ENCODE measurements at regions of chr15 and their contacts with region 1.

Region 1: DNA sequence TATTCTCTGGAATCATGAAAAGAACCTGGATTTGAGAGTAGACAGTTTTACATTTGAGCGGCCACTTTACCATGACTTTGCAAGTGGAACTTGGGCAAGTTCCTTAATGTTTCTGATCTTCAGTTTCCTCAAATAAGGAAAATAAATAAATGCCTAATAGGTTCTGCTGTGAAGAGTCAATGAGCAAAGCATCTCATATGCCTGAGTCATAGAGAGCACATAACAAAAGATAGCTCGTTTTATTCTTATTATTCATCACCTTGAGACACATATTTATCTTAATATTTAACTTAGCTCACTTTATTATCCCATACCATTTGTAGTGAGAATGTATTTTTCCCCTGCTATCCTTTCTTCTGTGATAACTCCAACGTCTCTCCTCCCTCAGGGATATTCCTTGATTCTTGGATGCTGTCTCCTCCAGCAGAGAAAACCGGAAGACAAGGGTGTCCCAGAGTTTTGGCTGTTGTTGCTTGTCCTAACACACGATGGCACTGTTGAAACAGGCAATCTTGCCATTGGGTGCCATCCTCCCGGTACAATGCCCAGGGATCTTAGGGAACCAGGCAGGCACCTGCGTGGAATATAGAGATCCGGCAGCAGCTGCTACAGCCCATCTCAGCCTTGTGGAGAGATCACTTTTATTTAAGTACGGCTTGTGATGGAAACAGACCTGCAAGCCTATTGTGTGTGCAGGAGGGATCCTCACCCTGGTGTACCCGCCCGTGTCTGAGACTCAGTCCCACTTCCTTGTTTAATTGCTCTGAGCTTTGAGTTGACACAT is 33.3 kb upstream of the VPS33B start:
- DNase-seq: peak; percentile 11
- ATAC-seq: peak; percentile 85
- H3K4me3 ChIP-seq: no peak overlapping the region
- H3K27ac ChIP-seq: no peak overlapping the region
- H3K4me1 ChIP-seq: no peaks in the 10 kb centered on the region
- H3K27me3 ChIP-seq: no peaks in the 10 kb centered on the region; a peak in 2 of 4 replicates
- CTCF ChIP-seq: peak; percentile 76 to 80 (median 80)
- EP300 ChIP-seq: no peak
- POLR2A ChIP-seq: no peak
- RAD21 ChIP-seq: peak; percentile 94

Region 2: DNA sequence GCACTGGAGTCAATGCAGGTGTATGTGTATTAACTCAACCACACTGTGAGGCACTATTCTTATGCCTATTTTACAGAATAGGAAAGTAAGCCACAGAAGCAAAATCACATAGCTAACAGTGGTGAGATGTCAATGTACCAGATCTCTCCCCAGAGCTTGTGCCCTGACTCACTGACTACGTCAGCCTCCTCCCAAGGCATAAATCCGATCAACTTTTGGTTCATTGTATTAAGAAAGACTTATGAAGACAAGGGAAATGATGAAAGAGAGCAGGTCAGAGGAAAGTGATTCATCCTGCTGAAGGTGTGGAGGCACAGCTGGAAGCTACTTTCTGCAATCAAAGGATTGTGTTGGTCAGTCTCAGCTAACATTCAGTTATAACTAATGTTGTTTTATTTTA is 11.3 kb after region 1 on chr15:
- CTCF ChIA-PET with region 1: interaction called, 14 read pairs
- POLR2A ChIA-PET with region 1: no interaction called
- RAD21 ChIA-PET with region 1: no interaction called
- SMC1A ChIA-PET with region 1: interaction called, 6 read pairs
- in situ Hi-C with region 1: no loop called
- intact Hi-C with region 1: no loop called
- DNase-seq: no peak
- ATAC-seq: no peak
- H3K4me3 ChIP-seq: no peak overlapping the region
- H3K27ac ChIP-seq: no peak overlapping the region
- H3K4me1 ChIP-seq: no peaks in the 10 kb centered on the region
- H3K27me3 ChIP-seq: no peaks in the 10 kb centered on the region; a peak in 1 of 4 replicates
- CTCF ChIP-seq: no peak
- EP300 ChIP-seq: no peak
- POLR2A ChIP-seq: no peak
- RAD21 ChIP-seq: no peak

Region 3: GRCh38 chr15:91142114-91142731 is 86.5 kb after region 1 on chr15:
- CTCF ChIA-PET with region 1: interaction called, 11 read pairs
- POLR2A ChIA-PET with region 1: no interaction called
- RAD21 ChIA-PET with region 1: interaction called, 6 read pairs
- SMC1A ChIA-PET with region 1: interaction called, 12 read pairs
- in situ Hi-C with region 1: no loop called
- intact Hi-C with region 1: loop called (anchors 1 kb)
- DNase-seq: no peak
- ATAC-seq: peak; percentile 68
- H3K4me3 ChIP-seq: no peak overlapping the region
- H3K27ac ChIP-seq: no peak overlapping the region
- H3K4me1 ChIP-seq: no peaks in the 10 kb centered on the region
- H3K27me3 ChIP-seq: no peaks in the 10 kb centered on the region
- CTCF ChIP-seq: peak; percentile 49 to 73 (median 61)
- EP300 ChIP-seq: no peak
- POLR2A ChIP-seq: no peak
- RAD21 ChIP-seq: peak; percentile 84

Region 4: GRCh38 chr15:91214675-91215590 is 159.2 kb after region 1 on chr15:
- CTCF ChIA-PET with region 1: interaction called, 17 read pairs
- POLR2A ChIA-PET with region 1: no interaction called
- RAD21 ChIA-PET with region 1: no interaction called
- SMC1A ChIA-PET with region 1: interaction called, 3 read pairs
- in situ Hi-C with region 1: loop called (anchors 5 kb)
- intact Hi-C with region 1: no loop called
- DNase-seq: no peak
- ATAC-seq: no peak
- H3K4me3 ChIP-seq: no peak overlapping the region
- H3K27ac ChIP-seq: no peak overlapping the region
- H3K4me1 ChIP-seq: no peaks in the 10 kb centered on the region
- H3K27me3 ChIP-seq: no peaks in the 10 kb centered on the region; a peak in 1 of 4 replicates
- CTCF ChIP-seq: no peak
- EP300 ChIP-seq: no peak
- POLR2A ChIP-seq: no peak
- RAD21 ChIP-seq: no peak

Region 5: DNA sequence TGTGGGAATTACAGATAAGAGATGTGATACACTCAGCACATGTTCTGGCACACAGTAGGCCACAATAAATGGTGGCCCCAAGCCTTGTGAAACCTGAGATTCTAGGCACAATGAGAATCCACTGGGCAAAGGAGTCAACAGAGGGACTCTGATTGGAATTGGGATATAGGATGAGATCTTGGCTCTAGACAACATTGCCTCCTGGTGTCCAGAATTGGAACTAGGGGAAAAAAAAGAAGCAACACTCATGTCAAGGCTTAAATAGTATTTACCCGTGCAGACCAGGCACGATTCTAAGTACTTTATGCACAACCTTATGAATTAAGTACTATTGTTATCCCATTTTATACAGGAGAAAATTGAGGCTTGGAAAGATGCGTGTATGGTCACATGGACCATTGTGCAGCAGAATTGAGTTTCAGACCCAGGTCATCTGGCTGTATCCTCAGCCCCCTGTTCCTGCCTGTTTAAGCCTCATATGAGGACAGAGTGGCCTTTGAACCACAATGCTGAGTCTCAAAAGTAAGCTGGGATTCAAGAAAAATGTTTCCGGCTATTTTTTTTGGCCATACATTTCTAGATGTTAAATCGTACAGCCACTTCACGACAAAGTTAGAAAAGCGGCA is 169.1 kb after region 1 on chr15:
- CTCF ChIA-PET with region 1: interaction called, 90 read pairs
- POLR2A ChIA-PET with region 1: no interaction called
- RAD21 ChIA-PET with region 1: interaction called, 14 read pairs
- SMC1A ChIA-PET with region 1: interaction called, 38 read pairs
- in situ Hi-C with region 1: loop called (anchors 5 kb)
- intact Hi-C with region 1: loop called (anchors 1 kb)
- DNase-seq: peak; percentile 5
- ATAC-seq: peak; percentile 44; the same call in 2 of the 3 replicates
- H3K4me3 ChIP-seq: no peak overlapping the region
- H3K27ac ChIP-seq: no peak overlapping the region
- H3K4me1 ChIP-seq: no peaks in the 10 kb centered on the region
- H3K27me3 ChIP-seq: no peaks in the 10 kb centered on the region; a peak in 1 of 4 replicates
- CTCF ChIP-seq: peak; percentile 74 to 82 (median 79)
- EP300 ChIP-seq: no peak
- POLR2A ChIP-seq: no peak
- RAD21 ChIP-seq: peak; percentile 89

Region 6: GRCh38 chr15:91231703-91232372 is 176.1 kb after region 1 on chr15:
- CTCF ChIA-PET with region 1: interaction called, 90 read pairs
- POLR2A ChIA-PET with region 1: no interaction called
- RAD21 ChIA-PET with region 1: interaction called, 5 read pairs
- SMC1A ChIA-PET with region 1: interaction called, 38 read pairs
- in situ Hi-C with region 1: no loop called
- intact Hi-C with region 1: no loop called
- DNase-seq: no peak
- ATAC-seq: no peak
- H3K4me3 ChIP-seq: no peak overlapping the region
- H3K27ac ChIP-seq: no peak overlapping the region
- H3K4me1 ChIP-seq: no peaks in the 10 kb centered on the region
- H3K27me3 ChIP-seq: no peaks in the 10 kb centered on the region; a peak in 1 of 4 replicates
- CTCF ChIP-seq: no peak
- EP300 ChIP-seq: no peak
- POLR2A ChIP-seq: no peak
- RAD21 ChIP-seq: no peak

Region 7: DNA sequence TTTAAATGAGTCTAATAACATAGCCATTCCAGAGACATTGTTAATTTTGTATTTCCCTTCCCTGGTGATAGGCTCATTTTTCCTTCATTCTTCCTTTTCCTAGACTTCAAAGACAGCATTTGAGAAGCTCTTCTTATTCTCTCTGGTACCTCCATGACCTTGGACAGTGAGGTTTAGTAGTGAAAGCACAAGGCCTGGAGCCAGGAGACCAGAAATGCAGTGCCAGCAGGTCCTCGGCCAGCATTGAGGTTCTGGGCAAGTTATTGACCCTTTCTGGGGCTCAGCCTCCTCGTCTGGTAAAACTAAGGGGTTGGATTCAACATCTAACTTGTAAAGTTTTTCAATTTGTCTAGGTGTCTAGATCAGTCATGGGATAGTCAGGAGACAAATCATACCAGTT is 191.3 kb after region 1 on chr15:
- CTCF ChIA-PET with region 1: interaction called, 24 read pairs
- POLR2A ChIA-PET with region 1: no interaction called
- RAD21 ChIA-PET with region 1: interaction called, 6 read pairs
- SMC1A ChIA-PET with region 1: interaction called, 12 read pairs
- in situ Hi-C with region 1: no loop called
- intact Hi-C with region 1: no loop called
- DNase-seq: no peak
- ATAC-seq: no peak
- H3K4me3 ChIP-seq: no peak overlapping the region
- H3K27ac ChIP-seq: no peak overlapping the region
- H3K4me1 ChIP-seq: no peaks in the 10 kb centered on the region
- H3K27me3 ChIP-seq: no peaks in the 10 kb centered on the region
- CTCF ChIP-seq: no peak
- EP300 ChIP-seq: no peak
- POLR2A ChIP-seq: no peak
- RAD21 ChIP-seq: no peak

Measured in GM12878 (cell line).